AG04450 (cell line): ENCODE measurements at regions of chr15 and their contacts with region 1.

Region 1: DNA sequence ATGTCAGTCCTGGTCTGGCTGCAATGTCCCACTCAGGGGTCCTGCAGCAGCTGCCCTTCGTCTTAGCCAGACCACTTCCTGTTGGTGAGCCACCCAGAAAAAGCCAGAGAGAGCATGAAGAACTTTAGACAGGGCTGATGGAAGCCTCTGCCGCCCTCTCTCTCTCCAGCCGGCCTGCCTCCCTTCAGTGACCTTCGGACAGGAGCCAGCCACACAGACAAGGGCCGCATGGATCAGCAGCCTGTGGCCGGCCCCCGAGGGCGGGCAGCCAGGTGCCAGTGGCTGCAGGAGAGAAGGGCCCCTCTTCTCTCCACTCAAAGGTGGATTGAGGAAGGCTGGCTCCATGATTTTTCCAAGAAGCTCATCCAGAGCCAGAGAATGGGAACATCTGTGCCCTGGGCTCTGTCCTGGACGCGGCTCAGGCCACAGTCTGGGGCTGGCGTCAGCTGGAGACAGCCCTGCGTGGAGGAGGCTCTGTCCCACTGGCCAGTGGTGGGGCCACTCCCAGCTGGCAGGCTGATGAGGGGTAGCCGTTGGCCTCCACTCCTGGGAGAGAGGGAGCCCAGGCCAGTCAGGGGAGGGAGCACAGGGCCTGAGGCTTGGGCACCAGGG is 42.9 kb downstream of the ISG20 start:
- DNase-seq: no peak
- H3K4me3 ChIP-seq: no peak overlapping the region
- H3K27ac ChIP-seq: no peak overlapping the region
- H3K27me3 ChIP-seq: peaks cover 10% of the 10 kb centered on the region
- CTCF ChIP-seq: no peak

Region 2: DNA sequence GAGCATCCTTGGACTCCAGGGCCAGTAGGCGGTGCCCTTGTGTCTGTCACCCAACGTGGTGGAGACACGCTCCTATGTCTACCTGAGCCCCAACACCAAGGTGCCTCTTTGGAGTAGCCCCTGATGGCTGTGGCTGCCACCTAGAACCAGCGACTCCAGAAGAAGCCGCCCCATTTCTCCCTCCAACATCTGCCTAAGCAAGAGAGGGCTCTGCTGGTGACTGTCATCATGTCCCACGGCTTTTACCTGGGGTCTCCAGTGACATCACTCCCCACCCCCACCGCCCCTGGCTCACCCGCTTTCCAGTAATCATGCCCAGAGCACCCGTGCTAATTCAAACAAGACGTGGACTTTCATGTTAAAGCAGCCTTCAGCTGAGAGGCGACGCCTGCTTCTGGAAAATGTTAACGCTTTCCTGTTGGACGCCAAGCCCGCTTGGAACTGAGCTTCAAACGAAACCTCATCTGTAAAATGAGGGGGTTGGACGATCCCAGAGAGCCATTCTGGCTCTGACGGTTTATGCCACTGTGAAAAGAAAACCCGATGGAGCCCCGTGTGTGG is 14.1 kb after region 1 on chr15:
- CTCF ChIA-PET with region 1: no interaction called
- POLR2A ChIA-PET with region 1: no interaction called
- DNase-seq: no peak
- H3K4me3 ChIP-seq: no peak overlapping the region
- H3K27ac ChIP-seq: no peak overlapping the region
- H3K27me3 ChIP-seq: peaks cover 30% of the 10 kb centered on the region
- CTCF ChIP-seq: no peak

Region 3: GRCh38 chr15:89052474-89052873 is 370.8 kb after region 1 on chr15:
- CTCF ChIA-PET with region 1: interaction called, 10 read pairs
- POLR2A ChIA-PET with region 1: no interaction called
- DNase-seq: peak; percentile 83
- H3K4me3 ChIP-seq: no peak overlapping the region
- H3K27ac ChIP-seq: peak overlapping the region; percentile 84
- H3K27me3 ChIP-seq: no peaks in the 10 kb centered on the region
- CTCF ChIP-seq: no peak